Tibial artery (tissue), 4 donors: ENCODE measurements at regions of chr3 and their contacts with region 1.

Region 1: DNA sequence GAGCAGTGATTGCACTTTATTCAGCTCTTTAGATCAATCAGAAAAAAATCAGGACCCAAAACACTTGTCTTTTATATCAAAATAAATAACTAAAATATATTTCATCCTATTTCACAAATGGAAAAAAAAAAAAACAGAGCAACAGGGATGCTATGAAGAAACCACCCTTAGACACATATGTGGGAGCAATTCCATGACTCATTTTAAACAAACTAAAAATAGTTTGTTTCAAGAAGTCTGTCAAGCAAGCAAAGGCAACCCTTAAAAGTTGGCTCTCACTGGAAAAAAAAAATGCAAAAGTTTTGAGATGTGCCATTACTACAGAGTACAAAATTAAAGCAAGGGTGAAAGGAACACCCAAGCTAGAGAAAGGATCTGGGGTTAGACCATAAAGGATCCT is 5.7 kb downstream of the ATP13A3 start:
- DNase-seq: no peak
- H3K4me3 ChIP-seq: no peak overlapping the region
- H3K27ac ChIP-seq: peak overlapping the region; percentile 33 to 59
- H3K4me1 ChIP-seq: peaks cover 0 to 92% (median 19%) of the 10 kb centered on the region in 4 donors
- H3K27me3 ChIP-seq: no peaks in the 10 kb centered on the region
- CTCF ChIP-seq: no peak

Region 2: DNA sequence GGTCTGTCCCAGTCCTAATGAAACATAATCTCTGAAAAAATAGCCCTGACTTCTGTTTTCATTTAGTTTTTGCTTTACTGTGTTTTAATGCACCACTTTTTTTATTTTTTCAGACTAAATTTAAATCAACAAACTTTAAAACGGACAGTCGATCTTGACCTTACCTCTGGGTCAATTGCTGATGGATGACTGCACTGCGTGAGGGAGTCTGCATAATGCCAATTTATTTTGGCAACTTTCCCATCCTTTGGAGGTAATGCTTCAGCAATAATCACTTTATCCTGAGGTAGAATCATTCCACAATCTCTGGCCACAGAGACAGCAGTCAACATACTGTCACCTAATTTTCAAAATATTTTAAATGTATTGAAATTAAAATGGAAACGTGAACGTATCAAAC is 49.5 kb before region 1 on chr3:
- intact Hi-C with region 1: no loop called
- DNase-seq: no peak
- H3K4me3 ChIP-seq: no peak overlapping the region
- H3K27ac ChIP-seq: no peak overlapping the region
- H3K4me1 ChIP-seq: no peaks in the 10 kb centered on the region
- H3K27me3 ChIP-seq: no peaks in the 10 kb centered on the region
- CTCF ChIP-seq: no peak

Region 3: DNA sequence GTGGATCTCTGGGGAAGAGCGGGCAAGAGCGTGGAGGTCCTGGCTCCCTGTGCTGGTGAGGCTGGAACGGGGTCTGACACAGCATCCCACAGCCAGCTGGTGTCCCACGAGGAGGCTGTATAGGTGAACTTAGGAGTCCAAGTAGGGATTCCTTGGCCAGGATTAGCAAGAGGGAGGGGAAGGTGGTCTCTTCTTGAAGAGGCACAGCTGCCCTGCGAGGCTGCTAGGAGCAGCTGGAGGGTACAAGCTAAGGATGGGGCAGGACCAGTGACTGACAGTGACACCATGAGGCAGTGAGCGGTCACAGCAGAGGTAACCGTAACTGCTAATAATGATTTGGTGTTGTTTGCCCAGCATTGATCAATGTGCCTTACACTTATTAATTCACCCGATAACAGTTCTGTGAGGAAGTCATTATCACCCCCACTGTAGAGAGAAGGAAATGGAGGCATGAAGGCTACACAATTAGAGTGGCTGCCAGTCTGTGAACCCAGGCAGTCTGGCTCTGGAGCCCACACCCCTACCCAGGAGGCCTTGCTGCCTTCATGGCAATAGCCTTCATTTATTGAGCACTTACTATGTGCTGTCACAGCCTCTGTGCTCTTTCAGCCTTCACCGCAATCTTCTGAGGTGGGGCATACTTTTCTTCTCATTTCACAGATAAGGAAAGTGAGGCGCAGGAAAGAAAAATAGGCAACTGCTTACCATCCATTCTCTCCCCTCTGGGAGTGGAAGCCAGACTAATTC is 92.8 kb after region 1 on chr3:
- intact Hi-C with region 1: loop called (anchors 2 kb)
- DNase-seq: no peak
- H3K4me3 ChIP-seq: no peak overlapping the region
- H3K27ac ChIP-seq: peak overlapping the region; percentile 79 to 85
- H3K4me1 ChIP-seq: peaks cover 3 to 35% (median 22%) of the 10 kb centered on the region in 4 donors
- H3K27me3 ChIP-seq: no peaks in the 10 kb centered on the region
- CTCF ChIP-seq: peak; percentile 70 to 75